ENCODE measurements at regions of chr15 and their contacts with region 1.

Region 1: DNA sequence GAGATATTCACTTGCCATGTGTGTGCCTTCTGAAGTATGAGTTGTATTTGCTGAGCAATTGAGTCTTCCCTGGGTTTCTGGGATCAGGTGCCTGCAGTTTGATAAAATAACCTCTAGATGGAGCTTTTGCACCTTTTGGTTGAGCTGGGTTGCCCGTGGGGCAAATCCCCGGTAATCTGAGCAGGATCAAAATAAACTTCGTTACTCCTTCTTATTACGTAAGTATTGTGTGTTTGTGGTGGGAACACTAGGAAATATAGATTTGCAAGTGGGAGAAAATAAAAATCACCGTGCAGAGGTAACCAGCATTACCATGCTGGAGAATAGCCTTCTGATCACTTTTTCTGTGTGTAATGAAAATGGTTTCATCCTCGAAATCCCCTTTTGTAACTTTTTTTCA is 277.4 kb upstream of the NR2E3 start:
- DNase-seq: peak in 1 of 2 experiments; percentile 27
- H3K4me3 ChIP-seq: no peak overlapping the region
- H3K27ac ChIP-seq: no peak overlapping the region
- H3K4me1 ChIP-seq: no peaks in the 10 kb centered on the region
- H3K27me3 ChIP-seq: no peaks in the 10 kb centered on the region
- CTCF ChIP-seq: peak; percentile 18 to 89 (median 81)
- EP300 ChIP-seq: no peak; a peak in 1 of 3 replicates
- POLR2A ChIP-seq: no peak
- RAD21 ChIP-seq: peak; percentile 90 to 94

Region 2: DNA sequence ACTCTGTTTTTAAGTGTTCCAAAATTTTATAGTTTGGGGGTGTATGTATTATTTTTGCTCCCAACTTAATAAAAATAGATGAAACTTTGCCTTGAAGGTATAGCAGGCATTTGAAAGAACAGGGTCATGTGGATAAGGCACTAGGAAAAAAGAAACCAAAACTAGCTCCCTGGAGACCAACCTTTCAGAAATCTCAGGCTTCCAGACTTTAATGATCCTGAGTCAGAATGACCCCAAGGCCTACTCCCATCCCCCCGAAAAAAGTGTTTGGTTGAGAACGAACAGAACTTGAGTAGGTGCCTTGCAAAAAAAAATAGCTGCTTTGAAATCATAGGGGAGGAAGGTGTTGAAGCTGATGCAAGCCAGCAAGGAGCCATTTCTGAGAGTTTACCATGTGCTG is 108.2 kb before region 1 on chr15:
- CTCF ChIA-PET with region 1: no interaction called
- POLR2A ChIA-PET with region 1: no interaction called
- DNase-seq: no peak
- H3K4me3 ChIP-seq: no peak overlapping the region
- H3K27ac ChIP-seq: no peak overlapping the region
- H3K4me1 ChIP-seq: peaks cover 0 to 3% (median 1%) of the 10 kb centered on the region in 4 experiments; a peak in 2 of 7 replicates
- H3K27me3 ChIP-seq: no peaks in the 10 kb centered on the region
- CTCF ChIP-seq: no peak
- EP300 ChIP-seq: no peak
- POLR2A ChIP-seq: no peak
- RAD21 ChIP-seq: no peak

Region 3: DNA sequence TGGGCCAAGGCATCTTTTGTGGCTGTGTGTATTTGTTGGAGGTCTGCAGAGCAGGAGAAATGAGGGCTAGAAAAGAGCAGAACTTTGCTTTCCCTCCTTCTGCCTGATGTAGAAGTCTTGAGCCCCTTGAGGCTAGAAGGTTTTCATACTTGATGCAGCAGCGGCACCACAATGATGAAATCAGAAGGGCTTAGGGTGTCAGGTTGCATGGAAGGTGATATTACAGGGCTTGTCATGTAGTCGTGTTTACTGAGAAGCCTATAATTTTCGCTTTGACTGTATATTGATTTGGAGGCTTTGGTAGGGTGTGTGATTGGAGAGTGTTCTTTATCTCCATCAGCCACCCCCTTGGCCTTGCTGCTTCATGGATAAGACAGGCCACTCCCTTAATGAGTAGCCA is 77.9 kb before region 1 on chr15:
- CTCF ChIA-PET with region 1: interaction called, 33 read pairs
- POLR2A ChIA-PET with region 1: no interaction called
- DNase-seq: no peak
- H3K4me3 ChIP-seq: no peak overlapping the region
- H3K27ac ChIP-seq: no peak overlapping the region
- H3K4me1 ChIP-seq: peaks cover 0 to 7% (median under 1%) of the 10 kb centered on the region in 4 experiments; a peak in 3 of 7 replicates
- H3K27me3 ChIP-seq: no peaks in the 10 kb centered on the region
- CTCF ChIP-seq: no peak
- EP300 ChIP-seq: no peak
- POLR2A ChIP-seq: no peak
- RAD21 ChIP-seq: no peak

Region 4: DNA sequence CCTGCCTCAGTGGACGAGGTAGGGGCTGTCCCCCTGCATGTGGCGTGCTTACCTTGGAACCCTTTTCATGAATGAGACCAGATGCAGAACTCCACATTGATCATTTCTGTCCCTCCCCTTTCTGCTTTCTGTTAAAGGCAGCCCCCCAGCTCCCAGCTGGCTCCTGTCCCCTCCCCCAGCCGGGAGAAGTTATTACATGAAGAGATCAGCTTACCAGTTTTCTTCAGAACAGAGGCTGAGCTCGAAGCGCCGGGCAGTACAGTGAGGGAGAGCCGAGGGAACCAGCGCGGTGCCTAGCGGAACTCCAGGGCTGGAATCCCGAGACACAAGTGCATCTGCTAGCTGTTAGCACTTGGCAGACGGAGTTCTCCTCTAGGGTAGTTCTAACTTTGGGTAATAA is 14.0 kb after region 1 on chr15:
- CTCF ChIA-PET with region 1: interaction called, 10 read pairs
- POLR2A ChIA-PET with region 1: no interaction called
- DNase-seq: no peak
- H3K4me3 ChIP-seq: no peak overlapping the region
- H3K27ac ChIP-seq: no peak overlapping the region
- H3K4me1 ChIP-seq: peaks cover 0 to 7% (median 2%) of the 10 kb centered on the region in 4 experiments; a peak in 1 of 7 replicates
- H3K27me3 ChIP-seq: no peaks in the 10 kb centered on the region
- CTCF ChIP-seq: no peak
- EP300 ChIP-seq: no peak
- POLR2A ChIP-seq: no peak
- RAD21 ChIP-seq: no peak

Measured in H1 (cell line).